K562 (cell line): ENCODE measurements at regions of chr9 and their contacts with region 1.

Region 1: DNA sequence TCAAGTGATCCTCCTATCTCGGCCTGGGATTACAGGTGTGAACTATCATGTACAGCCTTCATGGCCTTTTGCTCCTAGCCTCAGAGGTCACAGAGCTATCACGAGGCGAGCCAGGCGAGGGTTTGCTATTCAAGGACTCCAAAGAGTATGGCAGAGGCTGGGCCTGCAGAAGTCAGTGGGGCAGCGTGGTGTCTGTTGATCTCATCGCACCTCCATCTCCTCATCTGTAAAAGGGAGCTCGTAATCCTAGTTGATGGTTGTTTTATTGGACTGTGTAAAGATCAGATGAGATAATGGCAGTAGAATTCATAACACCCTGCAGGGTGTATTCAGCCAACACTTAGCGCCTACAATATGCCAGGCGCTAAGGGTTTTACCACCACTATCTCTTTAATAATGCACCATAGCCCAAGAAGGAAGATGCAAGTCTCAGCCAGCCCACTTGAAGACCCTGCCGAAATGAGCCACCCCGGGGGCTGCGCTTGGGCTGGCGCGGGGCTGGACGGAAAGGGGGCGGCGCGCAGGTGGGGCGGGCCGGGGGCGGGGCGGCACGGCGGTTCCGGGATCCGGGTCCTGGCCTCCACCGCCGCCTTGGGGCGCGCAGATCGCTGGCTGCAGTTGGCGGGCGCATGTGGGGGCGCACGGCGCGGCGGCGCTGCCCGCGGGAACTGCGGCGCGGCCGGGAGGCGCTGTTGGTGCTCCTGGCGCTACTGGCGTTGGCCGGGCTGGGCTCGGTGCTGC is at the start of gene GALNT12:
- DNase-seq: peak; percentile 80 to 92 (median 89)
- ATAC-seq: peak; percentile 75
- H3K4me3 ChIP-seq: peak within 1 kb of the TSS; percentile 66
- H3K27ac ChIP-seq: peak within 1 kb of the TSS; percentile 59
- H3K4me1 ChIP-seq: peaks cover 31 to 57% of the 10 kb centered on the region in 2 experiments
- H3K27me3 ChIP-seq: no peaks in the 10 kb centered on the region
- CTCF ChIP-seq: peak in 1 of 3 experiments; percentile 41; a peak in 1 of 6 replicates
- EP300 ChIP-seq: no peak
- POLR2A ChIP-seq: no peak
- RAD21 ChIP-seq: no peak
- polyA plus RNA-seq, gene GALNT12: 29.7 to 33.7 TPM

Region 2: DNA sequence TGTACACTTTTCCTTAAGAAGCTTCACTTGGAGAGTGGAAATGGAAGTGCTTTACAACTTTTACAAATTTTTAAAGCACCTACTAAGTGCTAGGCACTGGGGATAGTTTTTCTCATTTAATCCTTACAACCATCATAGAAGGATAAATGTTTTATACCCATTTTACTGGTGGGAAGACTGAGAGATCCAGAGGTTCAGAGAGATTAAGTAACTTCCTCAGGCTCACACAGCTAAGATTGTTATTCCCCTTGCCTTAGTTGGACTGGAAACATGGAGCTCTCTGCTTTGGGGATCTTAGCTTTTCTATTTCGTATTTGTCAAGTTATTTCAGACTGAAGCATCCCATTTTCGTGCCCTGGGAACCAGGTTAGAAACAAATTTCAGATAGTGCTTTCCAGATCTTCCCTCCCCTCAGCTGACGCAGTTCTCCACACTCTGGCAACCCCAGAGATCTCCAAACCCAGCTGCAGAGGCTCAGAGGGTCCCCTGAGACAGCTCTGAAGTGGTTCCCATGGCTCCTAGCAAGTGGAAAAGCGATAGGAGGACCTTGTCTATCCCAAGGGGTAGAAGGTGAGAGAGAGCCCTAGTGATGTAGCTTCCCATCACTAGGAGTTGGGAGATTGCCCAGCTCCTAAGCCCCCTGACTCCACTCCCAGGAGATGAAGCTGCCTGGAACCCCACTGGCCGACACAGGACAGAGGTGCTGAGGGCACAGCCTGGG is 82.3 kb before region 1 on chr9:
- CTCF ChIA-PET with region 1: no interaction called
- POLR2A ChIA-PET with region 1: no interaction called
- in situ Hi-C with region 1: no loop called
- intact Hi-C with region 1: no loop called
- DNase-seq: no peak
- ATAC-seq: no peak
- H3K4me3 ChIP-seq: no peak overlapping the region
- H3K27ac ChIP-seq: no peak overlapping the region
- H3K4me1 ChIP-seq: peaks cover 0 to 5% of the 10 kb centered on the region in 2 experiments; a peak in 2 of 5 replicates
- H3K27me3 ChIP-seq: peaks cover 18 to 30% of the 10 kb centered on the region in 2 experiments
- CTCF ChIP-seq: no peak
- EP300 ChIP-seq: no peak
- POLR2A ChIP-seq: no peak
- RAD21 ChIP-seq: no peak

Region 3: DNA sequence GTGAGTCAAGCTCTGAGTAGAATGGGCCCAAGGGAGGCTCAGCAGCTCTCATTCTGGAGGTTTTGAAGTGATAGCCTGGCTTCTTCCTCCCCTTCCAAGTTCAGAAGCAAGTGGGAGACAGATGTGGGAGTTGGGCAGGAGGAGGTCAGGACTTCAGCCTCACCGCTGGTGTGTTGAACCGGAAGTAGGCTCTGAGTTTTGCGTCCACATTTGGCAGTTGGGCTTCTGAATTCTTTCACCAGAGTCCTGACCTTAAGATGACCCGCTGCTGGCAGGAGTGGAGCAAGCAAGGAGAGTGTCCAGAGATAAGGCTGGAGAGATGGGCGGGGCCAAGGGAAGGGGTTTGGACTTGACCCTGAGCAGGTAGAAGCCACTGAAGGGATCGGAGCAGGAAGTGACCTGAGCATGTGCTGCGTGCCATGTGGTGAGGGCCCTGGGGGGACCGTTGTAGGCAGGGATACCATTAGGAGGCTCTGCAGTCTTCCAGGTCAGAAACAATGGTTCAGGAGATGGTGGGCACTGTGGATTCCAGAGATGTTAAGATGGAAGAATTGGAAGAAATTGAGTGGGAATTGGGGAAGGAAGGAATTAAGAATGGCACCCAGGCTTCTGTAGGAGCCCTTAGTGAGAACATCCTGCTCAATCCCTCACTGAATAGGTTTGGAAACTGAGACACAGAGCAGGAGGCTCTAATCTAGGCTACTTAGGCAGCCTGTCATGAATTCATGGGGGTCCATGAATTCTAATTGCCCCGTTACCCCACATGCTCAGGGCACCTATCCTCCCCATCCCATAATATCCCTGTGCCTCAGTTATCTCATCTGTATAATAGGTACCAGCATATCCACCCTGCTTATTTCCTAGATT is 26.1 kb after region 1 on chr9:
- CTCF ChIA-PET with region 1: no interaction called
- POLR2A ChIA-PET with region 1: interaction called, 4 read pairs
- in situ Hi-C with region 1: no loop called
- intact Hi-C with region 1: loop called (anchors 1 kb)
- DNase-seq: peak; percentile 92 to 99 (median 94)
- ATAC-seq: peak; percentile 96
- H3K4me3 ChIP-seq: peak overlapping the region; percentile 4; the same call in 1 of the 2 replicates
- H3K27ac ChIP-seq: peak overlapping the region; percentile 98
- H3K4me1 ChIP-seq: peaks cover 36 to 51% of the 10 kb centered on the region in 2 experiments
- H3K27me3 ChIP-seq: no peaks in the 10 kb centered on the region
- CTCF ChIP-seq: no peak; a peak in 1 of 6 replicates
- EP300 ChIP-seq: peak; percentile 94
- POLR2A ChIP-seq: peak; percentile 70
- RAD21 ChIP-seq: peak in 1 of 2 experiments; percentile 25; a peak in 1 of 4 replicates

Region 4: DNA sequence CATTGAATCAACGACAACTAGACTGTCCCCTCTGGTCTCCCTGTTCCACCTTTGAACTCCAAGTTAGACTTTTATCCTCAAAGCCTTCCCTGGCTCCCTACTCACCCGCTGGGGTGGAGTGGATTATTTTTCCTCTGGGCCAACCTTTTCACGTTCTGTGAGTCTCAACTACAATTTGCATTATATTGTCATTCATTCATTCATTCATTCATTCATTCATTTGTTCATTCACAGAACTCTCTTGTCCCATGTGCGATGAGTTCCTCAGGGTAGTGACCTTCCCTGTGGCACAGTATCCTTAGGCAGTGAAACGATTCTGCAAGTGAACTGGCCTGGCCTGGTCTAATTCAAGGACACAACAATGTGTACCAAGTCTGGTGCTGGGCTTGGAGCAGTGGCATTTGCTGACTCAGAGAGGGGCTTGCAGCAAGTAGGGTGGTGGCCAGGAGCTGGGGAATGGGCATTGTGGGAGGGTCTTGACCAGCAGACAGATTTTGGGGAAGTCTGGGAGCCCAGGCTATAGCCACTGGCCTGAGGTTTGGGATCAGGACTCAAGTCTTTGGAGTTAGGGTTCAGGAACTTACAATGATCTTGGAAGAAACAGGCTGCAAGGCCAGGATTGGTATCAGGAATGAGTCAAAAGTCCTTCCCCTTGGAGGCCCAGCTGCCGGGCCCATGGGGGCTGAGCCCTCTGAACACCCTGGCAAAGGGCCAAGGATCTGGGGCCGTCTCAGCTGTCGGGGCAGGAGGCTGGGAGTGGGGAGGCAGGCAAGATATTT is 99.2 kb after region 1 on chr9:
- CTCF ChIA-PET with region 1: no interaction called
- POLR2A ChIA-PET with region 1: no interaction called
- in situ Hi-C with region 1: no loop called
- intact Hi-C with region 1: loop called (anchors 5 kb)
- DNase-seq: peak; percentile 63 to 84 (median 68)
- ATAC-seq: peak; percentile 68
- H3K4me3 ChIP-seq: no peak overlapping the region
- H3K27ac ChIP-seq: no peak overlapping the region
- H3K4me1 ChIP-seq: peaks cover 7 to 39% of the 10 kb centered on the region in 2 experiments
- H3K27me3 ChIP-seq: no peaks in the 10 kb centered on the region
- CTCF ChIP-seq: no peak
- EP300 ChIP-seq: no peak
- POLR2A ChIP-seq: no peak
- RAD21 ChIP-seq: no peak